ENCODE measurements at regions of chr11 and their contacts with region 1.

Region 1: GRCh38 chr11:74492974-74493790 is at the start of gene LIPT2:
- DNase-seq: peak; percentile 96 to 98 (median 98)
- ATAC-seq: peak; percentile 99 to 100 (median 100)
- H3K4me3 ChIP-seq: peak within 1 kb of the TSS; percentile 79 to 98 (median 92)
- H3K27ac ChIP-seq: peak within 1 kb of the TSS; percentile 89 to 100 (median 99)
- H3K4me1 ChIP-seq: peaks cover 0 to 18% (median 12%) of the 10 kb centered on the region in 12 donors
- H3K27me3 ChIP-seq: no peaks in the 10 kb centered on the region
- CTCF ChIP-seq: no peak
- POLR2A ChIP-seq: peak in 1 of 2 donors; percentile 87
- total RNA-seq, gene LIPT2: 0.93 to 3.9 (median 1.6) TPM

Region 2: DNA sequence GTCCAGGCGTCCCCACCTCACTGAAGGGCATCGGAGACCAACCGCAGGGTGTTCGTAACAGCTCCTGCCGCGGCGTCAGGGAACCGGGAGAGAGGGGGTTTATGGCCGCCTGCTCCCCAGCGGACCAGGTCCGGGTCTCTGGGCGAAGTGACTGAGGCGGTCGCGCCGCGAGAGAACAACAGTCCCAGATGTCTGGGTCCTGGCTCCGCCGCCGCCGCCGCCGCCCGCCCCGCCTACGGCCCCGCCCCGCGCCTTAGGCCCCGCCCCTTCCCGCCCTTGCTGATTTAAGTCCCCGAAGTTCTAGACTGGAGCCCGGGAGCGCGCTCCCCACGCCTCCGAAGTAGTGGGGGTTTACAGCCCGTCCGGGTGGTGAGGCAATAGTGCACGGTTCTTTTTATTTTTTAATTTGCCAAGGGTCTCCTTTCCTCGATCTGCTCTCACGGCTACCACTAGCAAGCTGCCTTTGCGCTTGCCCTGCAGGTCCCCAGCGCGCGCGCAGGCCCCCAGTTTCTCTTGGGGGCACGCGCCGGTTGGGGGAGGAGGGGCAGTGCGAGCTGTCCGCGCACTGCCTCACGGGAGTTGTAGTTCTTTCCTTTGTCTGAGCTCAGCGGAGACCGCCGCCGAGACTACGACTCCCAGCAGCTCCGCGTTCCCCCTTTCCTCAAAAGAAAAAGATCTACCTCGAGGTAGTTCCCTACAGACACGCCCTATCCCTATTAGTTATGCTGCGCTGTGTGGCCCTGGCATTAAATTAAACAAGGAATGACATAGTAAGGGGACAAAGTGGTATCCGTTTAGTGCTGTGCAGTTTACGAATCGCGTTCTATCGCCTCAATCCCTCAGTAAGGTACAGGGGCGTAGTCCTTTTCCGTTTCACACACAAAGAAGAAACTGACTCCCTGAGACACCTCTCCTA is 94.7 kb before region 1 on chr11 and contains the start of gene PGM2L1:
- intact Hi-C with region 1: loop called in 2 of 10 experiments (anchors 5 kb)
- DNase-seq: peak; percentile 94 to 96 (median 96)
- ATAC-seq: peak; percentile 99
- H3K4me3 ChIP-seq: peak within 1 kb of the TSS; percentile 69 to 94 (median 81)
- H3K27ac ChIP-seq: peak within 1 kb of the TSS in 11 of 12 donors; percentile 69 to 94 (median 85)
- H3K4me1 ChIP-seq: peaks cover 0 to 9% (median 5%) of the 10 kb centered on the region in 12 donors
- H3K27me3 ChIP-seq: no peaks in the 10 kb centered on the region
- CTCF ChIP-seq: no peak
- POLR2A ChIP-seq: peak in 1 of 2 donors; percentile 54
- total RNA-seq, gene PGM2L1: 1.4 to 3.1 (median 1.8) TPM

Region 3: GRCh38 chr11:74443071-74443864 is 49.9 kb before region 1 on chr11:
- intact Hi-C with region 1: no loop called
- DNase-seq: no peak
- ATAC-seq: peak in 3 of 4 donors; percentile 56 to 68 (median 57)
- H3K4me3 ChIP-seq: no peak overlapping the region
- H3K27ac ChIP-seq: no peak overlapping the region
- H3K4me1 ChIP-seq: peaks cover 0 to 16% (median 0%) of the 10 kb centered on the region in 12 donors
- H3K27me3 ChIP-seq: no peaks in the 10 kb centered on the region
- CTCF ChIP-seq: peak in 4 of 12 donors; percentile 7 to 17 (median 11)
- POLR2A ChIP-seq: no peak

Region 4: DNA sequence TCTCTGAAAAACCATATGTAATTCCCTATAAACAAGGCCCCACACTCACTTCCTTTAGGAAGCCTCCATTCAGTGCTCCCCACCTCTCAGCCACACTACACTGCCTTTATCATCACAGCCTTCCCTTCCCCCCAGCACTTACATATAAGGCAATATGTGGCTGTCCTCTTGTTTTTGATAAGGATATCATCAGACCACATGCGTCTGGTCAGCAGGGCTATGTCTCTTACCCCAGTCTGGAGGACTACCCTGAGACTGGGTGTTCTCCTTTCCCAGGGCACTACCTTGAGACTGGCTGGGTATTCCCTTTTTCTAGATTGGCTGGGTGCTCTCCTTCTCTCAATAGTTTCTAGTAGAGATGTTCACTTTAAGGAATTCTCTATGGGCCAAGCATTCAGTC is 33.6 kb before region 1 on chr11:
- intact Hi-C with region 1: loop called in 2 of 10 experiments (anchors 5 kb)
- DNase-seq: no peak
- ATAC-seq: no peak
- H3K4me3 ChIP-seq: peak overlapping the region in 1 of 12 donors; percentile 56
- H3K27ac ChIP-seq: peak overlapping the region in 1 of 12 donors; percentile 93
- H3K4me1 ChIP-seq: peaks cover 0 to 20% (median 6%) of the 10 kb centered on the region in 12 donors
- H3K27me3 ChIP-seq: no peaks in the 10 kb centered on the region
- CTCF ChIP-seq: no peak
- POLR2A ChIP-seq: no peak

Measured in heart left ventricle (tissue), 16 donors.